GM12878 (cell line): ENCODE measurements at regions of chr12 and their contacts with region 1.

Region 1: GRCh38 chr12:12645485-12645884 is 33.8 kb downstream of the CREBL2 start:
- DNase-seq: no peak
- ATAC-seq: peak; percentile 90
- H3K4me3 ChIP-seq: peak overlapping the region; percentile 14; the same call in 1 of the 2 replicates
- H3K27ac ChIP-seq: peak overlapping the region; percentile 76
- H3K4me1 ChIP-seq: peaks cover 20% of the 10 kb centered on the region
- H3K27me3 ChIP-seq: no peaks in the 10 kb centered on the region
- CTCF ChIP-seq: peak; percentile 38 to 70 (median 50)
- EP300 ChIP-seq: no peak
- POLR2A ChIP-seq: no peak
- RAD21 ChIP-seq: peak; percentile 59

Region 2: DNA sequence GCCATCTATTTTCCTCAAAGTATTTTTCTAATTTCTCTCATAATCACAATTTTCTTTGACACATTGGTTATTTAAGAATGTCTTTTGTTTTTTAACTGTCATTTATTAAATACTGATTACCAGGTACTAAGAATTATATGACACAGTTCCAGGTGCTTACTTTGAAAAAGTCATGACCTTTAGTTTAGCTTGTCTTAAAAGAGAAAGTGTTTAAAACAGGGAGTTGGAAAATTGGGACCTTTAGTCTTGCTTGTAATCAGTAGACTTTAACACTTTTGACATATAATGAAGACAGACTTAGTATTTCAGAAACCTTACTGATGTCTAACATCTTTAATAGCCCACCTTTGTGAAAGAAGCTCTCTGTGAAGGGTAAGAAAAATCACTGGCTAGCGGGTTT is 14.6 kb before region 1 on chr12:
- CTCF ChIA-PET with region 1: interaction called, 27 read pairs
- POLR2A ChIA-PET with region 1: interaction called, 4 read pairs
- RAD21 ChIA-PET with region 1: interaction called, 3 read pairs
- SMC1A ChIA-PET with region 1: interaction called, 6 read pairs
- in situ Hi-C with region 1: no loop called
- intact Hi-C with region 1: no loop called
- DNase-seq: no peak
- ATAC-seq: no peak
- H3K4me3 ChIP-seq: no peak overlapping the region
- H3K27ac ChIP-seq: no peak overlapping the region
- H3K4me1 ChIP-seq: no peaks in the 10 kb centered on the region
- H3K27me3 ChIP-seq: no peaks in the 10 kb centered on the region
- CTCF ChIP-seq: no peak
- EP300 ChIP-seq: no peak
- POLR2A ChIP-seq: no peak
- RAD21 ChIP-seq: no peak

Region 3: DNA sequence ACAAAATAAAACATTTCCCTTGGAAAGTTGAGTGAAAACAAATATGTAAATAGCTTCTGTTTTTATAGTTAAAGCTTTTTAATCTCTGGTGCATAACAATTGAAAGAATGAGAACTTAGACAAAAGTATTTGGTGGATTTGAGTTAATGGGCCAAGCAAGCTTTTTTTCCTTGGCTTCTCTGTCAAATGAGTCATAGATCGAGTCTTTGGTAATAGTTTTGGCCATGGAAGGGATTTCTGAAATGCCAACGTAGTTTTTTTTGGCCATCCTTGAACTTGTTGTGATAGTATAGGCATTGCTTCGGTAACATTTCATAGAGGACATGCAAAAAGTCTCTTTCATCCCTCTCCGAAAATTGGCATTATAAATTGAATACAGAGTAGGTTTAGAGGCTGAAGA is 15.6 kb after region 1 on chr12:
- CTCF ChIA-PET with region 1: interaction called, 49 read pairs
- POLR2A ChIA-PET with region 1: interaction called, 6 read pairs
- RAD21 ChIA-PET with region 1: interaction called, 20 read pairs
- SMC1A ChIA-PET with region 1: interaction called, 19 read pairs
- in situ Hi-C with region 1: no loop called
- intact Hi-C with region 1: no loop called
- DNase-seq: no peak
- ATAC-seq: no peak
- H3K4me3 ChIP-seq: no peak overlapping the region
- H3K27ac ChIP-seq: no peak overlapping the region
- H3K4me1 ChIP-seq: peaks cover 4% of the 10 kb centered on the region; the same call in 1 of the 2 replicates
- H3K27me3 ChIP-seq: no peaks in the 10 kb centered on the region
- CTCF ChIP-seq: no peak
- EP300 ChIP-seq: no peak
- POLR2A ChIP-seq: no peak
- RAD21 ChIP-seq: no peak

Region 4: GRCh38 chr12:12686925-12687324 is 41.4 kb after region 1 on chr12:
- CTCF ChIA-PET with region 1: interaction called, 7 read pairs
- POLR2A ChIA-PET with region 1: interaction called, 3 read pairs
- RAD21 ChIA-PET with region 1: interaction called, 11 read pairs
- SMC1A ChIA-PET with region 1: interaction called, 14 read pairs
- in situ Hi-C with region 1: no loop called
- intact Hi-C with region 1: no loop called
- DNase-seq: no peak
- ATAC-seq: no peak
- H3K4me3 ChIP-seq: no peak overlapping the region
- H3K27ac ChIP-seq: no peak overlapping the region
- H3K4me1 ChIP-seq: peaks cover 29% of the 10 kb centered on the region
- H3K27me3 ChIP-seq: no peaks in the 10 kb centered on the region
- CTCF ChIP-seq: no peak
- EP300 ChIP-seq: no peak
- POLR2A ChIP-seq: no peak
- RAD21 ChIP-seq: no peak

Region 5: DNA sequence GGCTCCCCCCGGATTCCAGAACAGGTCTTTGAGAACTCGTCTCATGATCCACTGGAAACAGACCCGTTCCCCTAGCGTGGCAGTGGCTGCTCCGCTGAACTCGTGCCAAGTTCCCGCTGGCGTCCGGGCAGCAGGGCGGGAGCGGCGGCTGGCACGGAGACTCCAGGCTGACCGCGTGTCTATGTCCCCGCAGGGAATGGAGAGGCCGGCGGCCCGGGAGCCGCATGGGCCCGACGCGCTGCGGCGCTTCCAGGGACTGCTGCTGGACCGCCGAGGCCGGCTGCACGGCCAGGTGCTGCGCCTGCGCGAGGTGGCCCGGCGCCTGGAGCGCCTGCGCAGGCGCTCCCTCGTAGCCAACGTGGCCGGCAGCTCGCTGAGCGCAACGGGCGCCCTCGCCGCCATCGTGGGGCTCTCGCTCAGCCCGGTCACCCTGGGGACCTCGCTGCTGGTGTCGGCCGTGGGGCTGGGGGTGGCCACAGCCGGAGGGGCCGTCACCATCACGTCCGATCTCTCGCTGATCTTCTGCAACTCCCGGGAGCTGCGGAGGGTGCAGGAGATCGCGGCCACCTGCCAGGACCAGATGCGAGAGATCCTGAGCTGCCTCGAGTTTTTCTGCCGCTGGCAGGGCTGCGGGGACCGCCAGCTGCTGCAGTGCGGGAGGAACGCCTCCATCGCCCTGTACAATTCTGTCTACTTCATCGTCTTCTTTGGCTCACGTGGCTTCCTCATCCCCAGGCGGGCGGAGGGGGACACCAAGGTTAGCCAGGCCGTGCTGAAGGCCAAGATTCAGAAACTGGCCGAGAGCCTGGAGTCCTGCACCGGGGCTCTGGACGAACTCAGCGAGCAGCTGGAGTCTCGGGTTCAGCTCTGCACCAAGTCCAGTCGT is 141.5 kb after region 1 on chr12:
- CTCF ChIA-PET with region 1: no interaction called
- POLR2A ChIA-PET with region 1: no interaction called
- RAD21 ChIA-PET with region 1: no interaction called
- SMC1A ChIA-PET with region 1: no interaction called
- in situ Hi-C with region 1: no loop called
- intact Hi-C with region 1: no loop called
- DNase-seq: no peak
- ATAC-seq: peak; percentile 96
- H3K4me3 ChIP-seq: peak overlapping the region; percentile 65
- H3K27ac ChIP-seq: peak overlapping the region; percentile 27; the same call in 1 of the 2 replicates
- H3K4me1 ChIP-seq: peaks cover 18% of the 10 kb centered on the region
- H3K27me3 ChIP-seq: no peaks in the 10 kb centered on the region
- CTCF ChIP-seq: no peak
- EP300 ChIP-seq: no peak
- POLR2A ChIP-seq: peak; percentile 96
- RAD21 ChIP-seq: no peak

Region 6: DNA sequence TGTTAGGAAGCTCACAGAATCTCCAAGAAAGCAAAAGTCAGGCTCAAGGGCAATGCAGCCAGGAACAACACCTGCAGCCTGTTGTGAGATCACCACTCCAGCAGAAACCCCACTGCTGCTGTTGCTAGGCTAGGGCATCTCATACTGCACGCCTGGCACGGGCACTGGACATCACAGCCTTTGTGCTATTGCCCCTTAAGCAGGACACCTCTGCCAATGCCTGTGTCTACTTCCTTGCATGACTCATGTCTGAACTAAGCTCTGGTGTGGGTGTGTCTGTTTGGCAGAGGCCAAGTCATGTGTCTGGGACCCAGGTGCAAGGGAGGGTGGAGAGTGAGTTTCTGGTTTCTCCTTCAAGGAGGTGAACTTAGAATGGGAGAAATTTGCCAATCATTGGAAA is 157.7 kb after region 1 on chr12:
- CTCF ChIA-PET with region 1: no interaction called
- POLR2A ChIA-PET with region 1: no interaction called
- RAD21 ChIA-PET with region 1: no interaction called
- SMC1A ChIA-PET with region 1: no interaction called
- in situ Hi-C with region 1: no loop called
- intact Hi-C with region 1: no loop called
- DNase-seq: no peak
- ATAC-seq: peak; percentile 90
- H3K4me3 ChIP-seq: no peak overlapping the region
- H3K27ac ChIP-seq: no peak overlapping the region; the same call in 1 of the 2 replicates
- H3K4me1 ChIP-seq: peaks cover 33% of the 10 kb centered on the region
- H3K27me3 ChIP-seq: no peaks in the 10 kb centered on the region
- CTCF ChIP-seq: no peak
- EP300 ChIP-seq: peak in 1 of 2 experiments; percentile 61; a peak in 2 of 4 replicates
- POLR2A ChIP-seq: 0 out of 2 replicates have a peak, but pooled peaks have one; percentile 29
- RAD21 ChIP-seq: no peak